Adrenal gland (tissue), 19 donors: ENCODE measurements at regions of chr4 and their contacts with region 1.

Region 1: DNA sequence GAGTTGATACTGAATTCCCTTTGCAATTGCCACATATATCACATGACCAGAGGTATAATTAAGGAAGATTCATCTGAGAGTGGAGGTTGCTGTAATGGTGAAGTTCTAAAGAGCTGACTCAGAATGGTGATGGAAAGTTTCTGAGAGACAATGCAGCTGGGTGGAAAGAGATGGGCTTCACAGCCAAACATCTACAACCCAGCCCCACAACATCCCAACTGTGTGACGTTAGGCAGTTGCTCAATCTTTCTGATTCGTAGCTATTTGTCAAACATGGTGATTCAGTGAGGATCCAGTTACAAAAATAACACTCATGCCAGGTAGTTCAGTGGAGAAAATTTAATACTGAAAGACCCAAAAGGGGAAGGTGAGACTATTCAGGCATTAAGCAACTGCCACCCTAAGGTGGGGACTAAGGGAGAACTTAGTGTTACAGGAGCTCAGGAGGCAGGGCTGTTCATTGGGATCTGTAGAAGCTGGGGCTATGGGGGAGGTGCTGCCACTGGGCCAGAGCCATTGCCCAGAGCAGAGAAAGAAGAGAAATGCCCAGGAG is 6.9 kb upstream of the AFF1 start:
- DNase-seq: peak; percentile 40 to 88 (median 79)
- H3K4me3 ChIP-seq: no peak overlapping the region
- H3K27ac ChIP-seq: peak overlapping the region in 4 of 5 donors; percentile 25 to 77 (median 54)
- H3K4me1 ChIP-seq: peaks cover 0 to 16% of the 10 kb centered on the region in 2 donors
- H3K27me3 ChIP-seq: no peaks in the 10 kb centered on the region
- CTCF ChIP-seq: no peak
- POLR2A ChIP-seq: no peak

Region 2: DNA sequence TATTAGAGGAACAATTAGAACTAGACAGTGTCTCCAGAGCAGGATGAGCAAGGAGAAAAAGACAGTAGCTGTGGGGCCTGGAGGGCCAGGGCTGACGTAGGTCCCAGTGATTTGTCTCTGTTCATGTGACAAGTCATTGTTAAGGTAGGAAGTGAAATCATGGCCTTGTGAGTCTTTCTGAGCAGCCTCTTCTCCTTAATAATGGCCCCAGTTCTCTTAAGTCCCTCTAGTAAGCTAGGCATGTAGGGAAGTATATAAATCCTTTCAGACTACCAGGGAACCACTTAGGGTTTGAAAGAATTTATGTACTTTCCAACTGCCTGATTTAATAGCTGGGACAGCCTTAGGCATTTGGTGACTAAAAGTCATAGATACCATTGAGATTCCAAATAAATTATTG is 159.5 kb after region 1 on chr4:
- intact Hi-C with region 1: loop called (anchors 5 to 10 kb)
- DNase-seq: peak in 2 of 7 donors; percentile 23 to 32
- H3K4me3 ChIP-seq: no peak overlapping the region
- H3K27ac ChIP-seq: peak overlapping the region in 1 of 5 donors; percentile 56
- H3K4me1 ChIP-seq: peaks cover 0 to 13% of the 10 kb centered on the region in 2 donors
- H3K27me3 ChIP-seq: no peaks in the 10 kb centered on the region
- CTCF ChIP-seq: no peak
- POLR2A ChIP-seq: no peak